Activated CD4-positive, alpha-beta T cell treated with anti-CD3 and anti-CD28 coated beads for 36 hours (primary cell): ENCODE measurements at regions of chr16 and their contacts with region 1.

Region 1: DNA sequence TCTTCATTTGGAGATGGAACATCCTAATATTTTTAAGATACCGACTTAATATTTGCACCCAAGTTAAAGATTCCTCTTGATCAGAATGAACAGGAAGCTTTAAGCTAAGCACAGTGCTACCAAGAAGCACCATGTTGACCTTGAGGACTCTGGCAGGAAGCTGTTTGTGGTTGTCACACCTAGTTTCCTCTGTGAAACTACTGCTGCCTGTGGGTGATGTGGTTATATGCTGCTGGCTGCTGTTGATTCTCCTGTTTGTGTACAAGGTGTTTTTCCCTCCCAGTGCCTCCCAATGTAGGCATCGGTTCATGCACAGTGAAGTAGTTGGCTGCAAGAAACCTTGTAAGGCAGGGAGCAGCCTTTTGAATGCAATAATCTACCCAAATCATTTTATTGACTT is 23.4 kb downstream of the RBL2 start:
- DNase-seq: peak; percentile 78
- ATAC-seq: peak; percentile 89
- H3K4me3 Mint-ChIP-seq: peak overlapping the region; percentile 39
- H3K27ac Mint-ChIP-seq: peak overlapping the region; percentile 95
- H3K4me1 Mint-ChIP-seq: peaks cover 83% of the 10 kb centered on the region
- H3K27me3 Mint-ChIP-seq: no peaks in the 10 kb centered on the region

Region 2: DNA sequence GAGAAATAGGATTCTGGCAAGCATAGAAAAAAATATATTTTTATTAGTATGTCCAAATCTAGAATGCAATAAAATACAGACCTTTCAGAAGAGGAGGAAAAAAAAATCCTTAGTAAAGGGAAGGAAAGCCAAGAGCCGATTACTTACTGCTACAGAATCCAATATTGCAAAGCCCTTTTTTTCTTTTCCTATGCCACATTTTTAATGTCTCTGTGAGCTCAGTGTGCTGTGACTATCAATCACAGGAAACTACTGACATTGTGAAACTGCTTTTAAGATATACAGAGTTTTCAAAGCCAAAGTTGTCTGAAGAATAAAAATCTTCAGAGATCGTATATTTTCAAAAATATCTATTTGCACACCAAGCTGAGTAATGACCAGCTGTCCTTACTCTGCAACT is 525.3 kb before region 1 on chr16:
- CTCF ChIA-PET with region 1: no interaction called
- POLR2A ChIA-PET with region 1: no interaction called
- intact Hi-C with region 1: no loop called
- DNase-seq: no peak
- ATAC-seq: no peak
- H3K4me3 Mint-ChIP-seq: no peak overlapping the region
- H3K27ac Mint-ChIP-seq: no peak overlapping the region
- H3K4me1 Mint-ChIP-seq: no peaks in the 10 kb centered on the region
- H3K27me3 Mint-ChIP-seq: peaks cover 1% of the 10 kb centered on the region

Region 3: DNA sequence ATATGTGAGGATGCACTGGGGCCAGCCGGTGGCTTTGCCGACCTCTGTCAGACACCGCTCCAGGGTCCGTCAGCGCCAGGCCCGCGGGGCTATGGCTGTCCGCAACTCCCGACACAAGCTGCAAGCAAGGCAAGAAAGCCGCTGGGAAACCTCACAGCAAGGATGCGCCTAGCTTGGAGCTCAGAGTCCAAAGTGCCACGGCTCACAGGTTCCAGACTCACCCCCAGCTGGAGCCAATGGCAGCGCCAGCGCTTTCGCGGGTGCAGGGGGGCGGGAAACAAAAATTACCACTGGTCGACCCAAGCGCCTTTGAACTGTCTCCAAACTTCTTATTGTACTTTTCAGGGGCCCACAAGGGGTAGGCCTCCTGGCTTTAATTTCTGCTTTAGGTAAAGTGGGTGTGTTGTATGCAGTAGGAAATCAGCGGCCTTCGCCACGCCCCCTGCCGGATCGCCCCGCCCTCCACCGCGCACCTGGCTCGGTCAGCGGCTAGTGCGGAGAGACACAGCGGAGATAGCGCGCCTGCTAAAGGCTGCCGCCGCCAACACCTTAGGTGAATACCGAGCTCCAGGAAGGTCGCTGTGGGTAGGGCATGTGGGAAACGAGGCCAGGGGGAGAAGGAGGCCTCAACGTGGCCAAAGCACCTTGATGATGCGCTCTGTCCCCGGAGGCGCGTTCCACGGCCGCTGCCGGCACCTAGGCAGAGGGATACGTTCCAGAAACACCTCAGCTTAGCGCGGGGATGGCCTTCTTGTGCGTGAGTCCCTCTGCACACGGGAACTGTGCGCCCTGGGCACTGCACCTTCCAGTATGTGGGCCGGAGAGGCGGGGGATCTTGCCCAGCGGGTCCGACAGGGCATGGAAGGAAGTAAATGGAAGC is 84.4 kb before region 1 on chr16:
- CTCF ChIA-PET with region 1: no interaction called
- POLR2A ChIA-PET with region 1: no interaction called
- intact Hi-C with region 1: loop called (anchors 2 kb)
- DNase-seq: peak; percentile 88
- ATAC-seq: peak; percentile 97
- H3K4me3 Mint-ChIP-seq: no peak overlapping the region
- H3K27ac Mint-ChIP-seq: peak overlapping the region; percentile 61
- H3K4me1 Mint-ChIP-seq: peaks cover 24% of the 10 kb centered on the region
- H3K27me3 Mint-ChIP-seq: no peaks in the 10 kb centered on the region

Region 4: GRCh38 chr16:53435066-53435688 is 22.5 kb before region 1 on chr16:
- CTCF ChIA-PET with region 1: interaction called, 6 read pairs
- POLR2A ChIA-PET with region 1: interaction called, 3 read pairs
- intact Hi-C with region 1: loop called (anchors 1 to 2 kb)
- DNase-seq: peak; percentile 69
- ATAC-seq: peak; percentile 67
- H3K4me3 Mint-ChIP-seq: peak overlapping the region; percentile 98
- H3K27ac Mint-ChIP-seq: peak overlapping the region; percentile 95
- H3K4me1 Mint-ChIP-seq: peaks cover 42% of the 10 kb centered on the region
- H3K27me3 Mint-ChIP-seq: no peaks in the 10 kb centered on the region

Region 5: DNA sequence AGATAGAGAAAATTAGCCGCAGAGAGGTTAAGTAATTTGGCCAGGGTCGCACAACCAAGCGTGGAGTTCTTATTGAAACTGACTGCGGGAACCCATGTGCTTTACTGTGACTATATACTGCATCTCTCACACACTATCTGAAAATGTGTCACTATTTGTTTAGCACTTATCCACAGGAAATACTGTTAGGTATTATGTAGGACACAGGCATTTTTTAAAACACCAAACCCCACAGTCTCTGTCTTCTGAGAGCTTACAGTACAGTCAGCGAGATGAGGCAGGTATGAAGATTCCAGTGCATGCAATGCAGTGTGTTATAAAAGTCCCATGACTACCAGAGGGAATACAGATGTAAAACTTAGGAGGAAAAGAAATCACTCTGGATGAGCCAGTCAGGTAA is 12.1 kb before region 1 on chr16:
- CTCF ChIA-PET with region 1: interaction called, 15 read pairs
- POLR2A ChIA-PET with region 1: no interaction called
- intact Hi-C with region 1: no loop called
- DNase-seq: no peak
- ATAC-seq: peak; percentile 55
- H3K4me3 Mint-ChIP-seq: no peak overlapping the region
- H3K27ac Mint-ChIP-seq: peak overlapping the region; percentile 82
- H3K4me1 Mint-ChIP-seq: peaks cover 32% of the 10 kb centered on the region
- H3K27me3 Mint-ChIP-seq: no peaks in the 10 kb centered on the region

Region 6: GRCh38 chr16:53476867-53477266 is 19.2 kb after region 1 on chr16:
- CTCF ChIA-PET with region 1: interaction called, 4 read pairs
- POLR2A ChIA-PET with region 1: interaction called, 3 read pairs
- intact Hi-C with region 1: loop called (anchors 2 kb)
- DNase-seq: no peak
- ATAC-seq: no peak
- H3K4me3 Mint-ChIP-seq: no peak overlapping the region
- H3K27ac Mint-ChIP-seq: peak overlapping the region; percentile 56
- H3K4me1 Mint-ChIP-seq: peaks cover 42% of the 10 kb centered on the region
- H3K27me3 Mint-ChIP-seq: no peaks in the 10 kb centered on the region

Region 7: GRCh38 chr16:53503270-53503923 is 45.7 kb after region 1 on chr16:
- CTCF ChIA-PET with region 1: interaction called, 5 read pairs
- POLR2A ChIA-PET with region 1: interaction called, 3 read pairs
- intact Hi-C with region 1: loop called (anchors 1 to 2 kb)
- DNase-seq: peak; percentile 100
- ATAC-seq: peak; percentile 92
- H3K4me3 Mint-ChIP-seq: peak overlapping the region; percentile 94
- H3K27ac Mint-ChIP-seq: peak overlapping the region; percentile 96
- H3K4me1 Mint-ChIP-seq: peaks cover 60% of the 10 kb centered on the region
- H3K27me3 Mint-ChIP-seq: no peaks in the 10 kb centered on the region

Region 8: GRCh38 chr16:53703590-53704444 is 246.1 kb after region 1 on chr16 and contains the starts of genes FTO and RPGRIP1L:
- CTCF ChIA-PET with region 1: no interaction called
- POLR2A ChIA-PET with region 1: no interaction called
- intact Hi-C with region 1: loop called in 1 of 2 experiments (anchors 10 kb)
- DNase-seq: peak; percentile 99
- ATAC-seq: peak; percentile 98
- H3K4me3 Mint-ChIP-seq: peak within 1 kb of the TSS; percentile 96
- H3K27ac Mint-ChIP-seq: peak within 1 kb of the TSS; percentile 97
- H3K4me1 Mint-ChIP-seq: peaks cover 35% of the 10 kb centered on the region
- H3K27me3 Mint-ChIP-seq: no peaks in the 10 kb centered on the region
- total RNA-seq, gene FTO: 50.9 to 57.6 TPM
- total RNA-seq, gene RPGRIP1L: 7.8 to 10.2 TPM